H1 (cell line): ENCODE measurements at regions of chr10 and their contacts with region 1.

Region 1: DNA sequence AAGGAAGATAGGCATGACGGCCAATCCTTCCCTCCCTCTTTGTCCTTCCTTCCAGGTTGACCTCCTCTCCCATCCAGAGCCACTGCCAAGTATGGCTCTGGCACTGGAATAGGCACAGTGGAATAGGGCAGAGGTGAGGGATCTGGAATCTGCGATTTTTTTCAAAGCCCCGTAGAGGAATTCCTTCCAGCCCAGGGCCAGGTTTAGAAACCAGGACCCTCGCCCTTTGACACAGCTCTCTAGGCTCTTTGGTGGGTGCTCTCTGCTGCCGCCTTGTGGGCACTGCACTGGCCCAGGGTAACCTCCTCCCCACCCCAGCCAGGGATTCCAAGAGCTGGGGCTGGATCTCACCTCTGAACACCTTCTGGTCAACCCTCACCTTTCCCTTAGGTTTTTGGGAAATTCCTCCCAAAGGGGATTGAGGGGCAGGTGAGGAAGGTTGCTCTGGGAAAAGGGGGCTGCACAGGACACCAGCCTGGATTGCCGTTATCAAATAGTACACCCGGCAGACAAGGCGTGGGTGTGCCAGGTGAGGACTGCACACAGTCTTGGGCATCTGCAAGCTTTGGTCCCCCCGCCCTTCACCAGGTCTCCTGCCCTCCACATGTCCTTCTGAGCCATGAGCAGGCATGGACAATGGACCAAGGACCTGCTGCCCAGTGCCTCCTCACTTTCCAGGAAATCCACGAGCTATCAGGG is 22.8 kb downstream of the C10orf105 start:
- DNase-seq: peak; percentile 41 to 95
- H3K4me3 ChIP-seq: no peak overlapping the region
- H3K27ac ChIP-seq: no peak overlapping the region
- H3K4me1 ChIP-seq: no peaks in the 10 kb centered on the region; a peak in 1 of 7 replicates
- H3K27me3 ChIP-seq: no peaks in the 10 kb centered on the region
- CTCF ChIP-seq: peak; percentile 94 to 95 (median 95)
- EP300 ChIP-seq: no peak
- POLR2A ChIP-seq: no peak
- RAD21 ChIP-seq: peak; percentile 81 to 87

Region 2: DNA sequence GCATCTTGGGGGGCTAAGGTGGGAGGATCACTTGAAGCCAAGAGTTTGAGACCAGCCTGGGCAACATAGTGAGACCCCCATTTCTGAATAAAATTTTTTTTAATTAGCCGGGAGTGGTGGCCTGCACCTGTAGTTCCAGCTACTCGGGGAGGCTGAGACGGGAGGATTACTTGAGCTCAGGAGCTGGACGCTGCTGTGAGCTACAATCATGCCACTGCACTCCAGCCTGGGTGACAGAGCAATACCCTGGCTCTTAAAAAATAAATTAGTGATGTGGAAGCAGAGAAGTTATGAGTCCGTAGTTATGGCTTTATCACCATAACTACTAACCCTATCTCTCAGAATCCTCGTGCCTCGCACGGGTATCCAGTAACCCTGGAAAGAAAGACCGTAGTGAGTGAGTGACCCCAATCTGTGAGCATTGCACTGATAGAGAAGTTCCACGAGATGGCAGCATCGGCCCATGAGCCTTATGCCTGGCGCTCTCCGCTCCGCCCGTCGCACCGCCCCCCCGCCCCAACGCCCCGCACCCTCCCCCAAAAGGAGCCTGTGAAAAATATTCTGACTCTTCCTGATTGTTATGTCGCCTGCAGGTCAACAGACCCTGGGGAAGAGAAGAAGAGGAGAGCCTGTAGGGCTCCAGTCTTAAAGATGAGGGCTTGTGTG is 382.6 kb before region 1 on chr10:
- CTCF ChIA-PET with region 1: interaction called, 33 read pairs
- POLR2A ChIA-PET with region 1: interaction called, 4 read pairs
- DNase-seq: peak; percentile 9 to 73
- H3K4me3 ChIP-seq: peak overlapping the region; percentile 5 to 55 (median 18); a peak in 4 of 8 replicates
- H3K27ac ChIP-seq: no peak overlapping the region
- H3K4me1 ChIP-seq: peaks cover 2 to 5% (median 3%) of the 10 kb centered on the region in 4 experiments; a peak in 4 of 7 replicates
- H3K27me3 ChIP-seq: peaks cover 0 to 12% (median 3%) of the 10 kb centered on the region in 4 experiments; a peak in 4 of 7 replicates
- CTCF ChIP-seq: peak; percentile 69 to 81 (median 79)
- EP300 ChIP-seq: no peak
- POLR2A ChIP-seq: no peak
- RAD21 ChIP-seq: peak; percentile 84 to 85

Region 3: GRCh38 chr10:71486484-71487114 is 210.2 kb before region 1 on chr10:
- CTCF ChIA-PET with region 1: interaction called, 36 read pairs
- POLR2A ChIA-PET with region 1: no interaction called
- DNase-seq: peak in 1 of 2 experiments; percentile 93
- H3K4me3 ChIP-seq: no peak overlapping the region
- H3K27ac ChIP-seq: no peak overlapping the region
- H3K4me1 ChIP-seq: peaks cover 0 to 6% (median 1%) of the 10 kb centered on the region in 4 experiments; a peak in 3 of 7 replicates
- H3K27me3 ChIP-seq: no peaks in the 10 kb centered on the region
- CTCF ChIP-seq: peak; percentile 92 to 99 (median 96)
- EP300 ChIP-seq: no peak
- POLR2A ChIP-seq: no peak
- RAD21 ChIP-seq: peak; percentile 92 to 94

Region 4: GRCh38 chr10:71647526-71648253 is 49.1 kb before region 1 on chr10:
- CTCF ChIA-PET with region 1: interaction called, 50 read pairs
- POLR2A ChIA-PET with region 1: no interaction called
- DNase-seq: peak in 1 of 2 experiments; percentile 78
- H3K4me3 ChIP-seq: no peak overlapping the region
- H3K27ac ChIP-seq: no peak overlapping the region
- H3K4me1 ChIP-seq: peaks cover 10 to 14% (median 10%) of the 10 kb centered on the region in 4 experiments
- H3K27me3 ChIP-seq: no peaks in the 10 kb centered on the region
- CTCF ChIP-seq: peak; percentile 73 to 84 (median 83)
- EP300 ChIP-seq: no peak
- POLR2A ChIP-seq: no peak
- RAD21 ChIP-seq: peak; percentile 46 to 74

Region 5: GRCh38 chr10:71679425-71679824 is 17.4 kb before region 1 on chr10:
- CTCF ChIA-PET with region 1: interaction called, 63 read pairs
- POLR2A ChIA-PET with region 1: interaction called, 3 read pairs
- DNase-seq: no peak
- H3K4me3 ChIP-seq: no peak overlapping the region
- H3K27ac ChIP-seq: no peak overlapping the region
- H3K4me1 ChIP-seq: peaks cover 0 to 2% (median 0%) of the 10 kb centered on the region in 4 experiments; a peak in 1 of 7 replicates
- H3K27me3 ChIP-seq: no peaks in the 10 kb centered on the region; a peak in 1 of 7 replicates
- CTCF ChIP-seq: no peak
- EP300 ChIP-seq: no peak
- POLR2A ChIP-seq: no peak
- RAD21 ChIP-seq: no peak

Region 6: DNA sequence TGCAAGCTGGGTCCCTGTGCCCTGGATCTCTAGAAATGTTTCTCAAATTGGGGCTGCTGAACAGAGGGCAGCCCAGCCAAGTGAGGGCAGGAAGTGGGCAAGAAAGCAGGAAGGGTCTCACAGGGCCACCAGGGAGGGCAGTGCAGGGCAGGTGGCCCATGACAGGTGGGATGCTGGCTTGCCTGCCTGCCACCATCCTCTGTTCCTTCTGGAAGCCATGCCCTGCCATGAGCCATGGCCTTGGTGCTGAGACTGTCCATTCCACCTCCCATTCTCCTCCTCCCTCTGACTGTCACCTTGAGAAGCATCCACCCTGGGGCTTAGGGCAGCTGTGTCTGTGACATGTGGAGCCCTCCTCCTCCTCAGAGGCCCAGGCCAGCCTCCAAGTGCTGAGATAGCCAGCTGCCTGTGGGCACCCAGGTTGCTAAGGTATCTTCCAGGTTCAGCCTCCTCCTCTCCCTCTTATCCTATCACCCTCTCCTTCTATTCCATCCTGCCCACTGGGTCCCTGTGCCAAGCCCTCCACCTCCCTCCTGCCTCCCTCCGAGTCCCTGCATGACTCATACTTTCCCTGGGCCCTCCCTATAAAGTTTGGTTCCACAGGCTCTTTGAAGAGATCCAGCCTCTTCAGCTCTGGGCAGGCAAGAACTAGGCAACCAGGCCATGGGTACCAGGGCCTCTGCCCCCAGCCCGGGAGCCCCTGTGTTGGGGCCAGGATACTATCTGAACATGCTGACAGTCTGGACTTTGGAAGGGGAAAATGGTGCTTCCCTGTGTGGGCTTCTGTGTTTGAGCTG is 75.2 kb after region 1 on chr10:
- CTCF ChIA-PET with region 1: interaction called, 10 read pairs
- POLR2A ChIA-PET with region 1: no interaction called
- DNase-seq: no peak
- H3K4me3 ChIP-seq: no peak overlapping the region
- H3K27ac ChIP-seq: no peak overlapping the region
- H3K4me1 ChIP-seq: peaks cover 0 to 7% (median under 1%) of the 10 kb centered on the region in 4 experiments; a peak in 3 of 7 replicates
- H3K27me3 ChIP-seq: peaks cover 3 to 23% (median 16%) of the 10 kb centered on the region in 4 experiments; a peak in 6 of 7 replicates
- CTCF ChIP-seq: no peak
- EP300 ChIP-seq: no peak
- POLR2A ChIP-seq: no peak
- RAD21 ChIP-seq: no peak

Region 7: GRCh38 chr10:71845410-71846405 is 148.9 kb after region 1 on chr10:
- CTCF ChIA-PET with region 1: no interaction called
- POLR2A ChIA-PET with region 1: no interaction called
- DNase-seq: no peak
- H3K4me3 ChIP-seq: no peak overlapping the region
- H3K27ac ChIP-seq: no peak overlapping the region
- H3K4me1 ChIP-seq: peaks cover 5 to 10% (median 7%) of the 10 kb centered on the region in 4 experiments; a peak in 6 of 7 replicates
- H3K27me3 ChIP-seq: no peaks in the 10 kb centered on the region
- CTCF ChIP-seq: no peak
- EP300 ChIP-seq: no peak
- POLR2A ChIP-seq: no peak
- RAD21 ChIP-seq: no peak